Posterior cingulate gyrus (tissue), 11 donors: ENCODE measurements at regions of chr19 and their contacts with region 1.

Region 1: DNA sequence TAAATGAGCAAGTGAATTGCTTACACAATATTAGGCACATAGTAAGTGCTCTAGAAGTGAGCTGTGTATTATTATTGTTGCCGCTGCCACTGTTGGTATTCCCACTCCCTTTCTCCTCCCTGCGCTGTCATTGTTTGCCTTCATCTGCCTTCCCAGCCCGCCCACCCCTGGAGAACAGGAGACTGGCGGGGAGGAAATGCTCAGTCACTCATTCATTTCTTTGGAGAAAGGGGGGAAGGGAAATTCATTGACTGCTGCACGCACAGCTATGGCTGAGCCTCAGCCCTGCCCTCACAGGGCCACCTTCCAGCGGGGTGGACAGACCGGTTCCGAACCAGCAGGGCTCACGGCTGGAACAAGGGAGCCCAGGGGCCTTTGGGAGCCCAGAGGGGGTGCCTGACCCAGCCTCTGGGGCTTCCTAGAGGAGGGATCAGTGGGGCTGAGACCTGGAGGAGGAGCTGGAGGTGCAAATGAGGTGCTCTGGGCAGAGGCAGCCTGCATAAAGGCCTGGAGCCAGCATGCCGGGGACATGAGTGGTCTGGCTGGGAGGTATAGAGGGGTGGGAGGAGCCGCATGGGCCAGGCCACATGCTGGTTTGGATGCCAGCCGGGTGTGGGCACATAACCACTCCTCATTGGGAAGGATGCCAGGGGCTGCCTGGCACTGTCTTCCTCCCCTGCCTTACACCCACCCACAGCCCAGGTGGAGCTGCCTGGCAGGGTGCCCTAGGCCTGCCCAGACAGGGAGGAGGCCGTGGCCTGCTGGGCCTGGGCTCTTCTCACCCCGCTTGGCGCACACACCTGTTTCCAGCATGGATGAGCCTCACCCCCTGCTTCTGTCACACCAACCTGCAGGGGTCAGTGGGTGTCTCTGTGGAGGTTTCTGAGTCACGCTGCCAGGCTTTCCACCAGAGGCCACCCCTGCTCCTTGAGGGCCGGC is 26.8 kb downstream of the PPP5C start:
- DNase-seq: peak in 6 of 10 donors; percentile 25 to 91 (median 68)

Region 2: DNA sequence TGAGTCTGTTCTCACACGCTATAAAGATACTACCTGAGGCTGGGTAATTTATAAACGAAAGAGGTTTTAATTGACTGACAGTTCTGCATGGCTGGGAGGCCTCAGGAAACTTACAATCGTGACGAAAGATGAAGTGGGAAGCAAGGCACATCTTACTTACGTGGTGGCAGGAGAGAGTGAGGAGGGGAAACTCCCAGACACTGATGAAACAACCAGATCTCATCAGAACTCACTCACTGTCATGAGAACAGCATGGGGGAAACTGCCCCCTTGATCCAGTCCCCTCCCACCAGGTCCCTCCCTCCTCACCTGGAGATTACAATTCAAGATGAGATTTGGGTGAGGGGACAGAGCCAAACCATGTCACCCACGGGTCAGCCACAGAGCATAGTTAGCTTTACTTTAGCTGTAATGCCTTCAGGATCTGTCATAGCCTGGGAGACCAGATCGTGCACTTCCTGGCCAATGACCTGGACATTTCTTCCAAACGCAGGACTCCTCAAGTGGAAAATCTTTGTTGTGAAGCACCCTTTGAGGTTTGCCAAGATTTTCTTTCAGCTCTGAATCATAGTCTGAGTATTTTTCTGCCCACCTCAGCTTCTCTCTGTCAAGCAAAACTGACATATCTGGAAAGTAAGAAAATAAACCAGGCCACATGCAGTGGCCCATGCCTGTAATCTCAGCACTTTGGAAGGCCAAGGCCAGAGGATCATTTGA is 102.1 kb before region 1 on chr19:
- intact Hi-C with region 1: no loop called
- DNase-seq: no peak

Region 3: GRCh38 chr19:46288896-46289588 is 84.6 kb before region 1 on chr19:
- intact Hi-C with region 1: loop called (anchors 10 kb)
- DNase-seq: peak in 1 of 10 donors; percentile 28

Region 4: GRCh38 chr19:46413262-46414031 is 39.8 kb after region 1 on chr19 and contains the start of gene CCDC8:
- intact Hi-C with region 1: no loop called
- DNase-seq: peak in 4 of 10 donors; percentile 16 to 87 (median 58)

Region 5: DNA sequence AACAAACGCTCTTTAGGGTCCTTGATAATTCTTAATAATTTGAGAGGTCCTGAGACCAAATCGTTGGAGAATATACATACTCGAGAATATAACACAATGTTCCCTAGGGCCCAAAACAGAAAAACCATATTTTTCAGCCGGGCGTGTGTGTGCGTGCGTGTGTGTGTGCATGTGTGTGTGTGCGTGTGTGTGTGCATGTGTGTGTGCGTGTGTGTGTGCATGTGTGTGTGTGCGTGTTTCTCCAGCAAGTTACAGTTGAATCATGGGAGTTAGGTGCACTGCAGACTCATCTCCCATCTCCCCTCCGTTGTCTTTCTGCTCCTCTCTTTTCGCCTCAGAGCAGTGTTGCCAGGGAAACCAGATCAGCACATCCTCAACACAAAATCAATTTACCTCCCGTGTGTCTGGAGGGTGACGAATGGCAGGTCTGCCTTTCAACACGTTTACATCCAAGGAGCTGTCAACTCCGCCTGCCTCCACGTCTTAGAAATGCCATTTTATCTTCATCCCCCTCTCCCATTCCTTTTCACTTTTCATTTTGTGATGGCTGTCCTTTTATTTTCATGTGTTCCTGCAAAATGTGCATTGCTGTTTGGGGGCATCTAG is 130.3 kb after region 1 on chr19:
- intact Hi-C with region 1: no loop called
- DNase-seq: no peak